AG04450 (cell line): ENCODE measurements at regions of chr7 and their contacts with region 1.

Region 1: GRCh38 chr7:128322040-128322643 is 21.6 kb downstream of the RBM28 start:
- DNase-seq: no peak
- H3K4me3 ChIP-seq: no peak overlapping the region
- H3K27ac ChIP-seq: no peak overlapping the region
- H3K27me3 ChIP-seq: no peaks in the 10 kb centered on the region
- CTCF ChIP-seq: peak; percentile 51

Region 2: DNA sequence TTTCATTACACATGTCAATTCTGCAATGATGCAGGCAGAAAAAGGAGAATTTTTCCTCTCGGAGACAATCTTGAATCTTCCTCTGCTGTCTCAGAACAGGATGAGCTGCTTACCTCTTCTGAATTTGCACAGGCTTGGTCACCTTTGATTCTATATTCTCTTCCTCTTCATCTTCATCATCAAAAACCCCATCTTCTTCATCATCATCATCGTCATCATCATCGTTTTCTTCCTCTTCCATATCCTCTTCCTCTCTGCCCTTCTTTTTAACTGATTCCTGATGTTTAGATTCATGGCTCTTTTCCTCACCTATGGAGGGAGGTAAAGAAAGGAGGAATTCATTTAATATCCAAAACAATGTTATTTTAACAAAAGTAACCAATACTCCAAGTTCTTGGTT is 13.6 kb after region 1 on chr7:
- CTCF ChIA-PET with region 1: interaction called, 12 read pairs
- POLR2A ChIA-PET with region 1: no interaction called
- DNase-seq: no peak
- H3K4me3 ChIP-seq: no peak overlapping the region
- H3K27ac ChIP-seq: no peak overlapping the region
- H3K27me3 ChIP-seq: no peaks in the 10 kb centered on the region
- CTCF ChIP-seq: no peak

Region 3: GRCh38 chr7:128997181-128997580 is 675.0 kb after region 1 on chr7:
- CTCF ChIA-PET with region 1: no interaction called
- POLR2A ChIA-PET with region 1: no interaction called
- DNase-seq: no peak
- H3K4me3 ChIP-seq: no peak overlapping the region
- H3K27ac ChIP-seq: no peak overlapping the region
- H3K27me3 ChIP-seq: no peaks in the 10 kb centered on the region
- CTCF ChIP-seq: no peak